Activated CD4-positive, alpha-beta T cell treated with anti-CD3 and anti-CD28 coated beads, Interleukin-2, amount 10 ng/mL, durations not matched to agents 24 days and 14 days (primary cell): ENCODE measurements at regions of chr7 and their contacts with region 1.

Region 1: DNA sequence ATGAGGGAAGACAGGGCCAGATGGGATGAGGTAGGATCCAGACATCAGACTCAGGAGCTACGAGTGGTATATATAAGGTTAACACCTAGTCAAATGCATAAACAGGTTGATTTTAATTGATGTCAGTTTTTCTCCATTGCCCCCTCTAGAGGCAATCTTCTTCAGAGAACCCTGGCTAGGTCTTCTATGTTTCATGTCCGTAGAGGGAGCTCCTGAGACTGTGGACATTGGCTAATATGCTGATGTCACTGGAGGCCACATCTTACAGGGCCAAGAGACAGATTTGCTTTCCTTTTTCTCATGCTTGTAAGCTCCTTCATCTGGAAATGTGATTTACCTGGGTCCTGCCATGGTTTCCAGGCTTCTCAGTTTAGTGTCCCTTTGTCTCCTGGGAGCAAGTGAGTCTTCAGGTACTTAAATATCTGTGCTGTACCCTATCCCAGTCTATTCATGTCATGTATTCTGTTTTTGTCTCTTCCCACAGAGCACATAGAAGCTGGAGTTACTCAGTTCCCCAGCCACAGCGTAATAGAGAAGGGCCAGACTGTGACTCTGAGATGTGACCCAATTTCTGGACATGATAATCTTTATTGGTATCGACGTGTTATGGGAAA is 161.6 kb upstream of the PRSS1 start:
- DNase-seq: peak; percentile 70
- H3K4me3 Mint-ChIP-seq: no peak overlapping the region
- H3K27ac Mint-ChIP-seq: no peak overlapping the region
- H3K4me1 Mint-ChIP-seq: peaks cover 14% of the 10 kb centered on the region
- H3K27me3 Mint-ChIP-seq: no peaks in the 10 kb centered on the region

Region 2: GRCh38 chr7:142557971-142558582 is 29.6 kb before region 1 on chr7:
- intact Hi-C with region 1: loop called (anchors 1 kb)
- DNase-seq: peak; percentile 86
- H3K4me3 Mint-ChIP-seq: peak overlapping the region; percentile 46
- H3K27ac Mint-ChIP-seq: peak overlapping the region; percentile 0
- H3K4me1 Mint-ChIP-seq: peaks cover 23% of the 10 kb centered on the region
- H3K27me3 Mint-ChIP-seq: peaks cover 9% of the 10 kb centered on the region